ENCODE measurements at regions of chr21 and their contacts with region 1.

Region 1: DNA sequence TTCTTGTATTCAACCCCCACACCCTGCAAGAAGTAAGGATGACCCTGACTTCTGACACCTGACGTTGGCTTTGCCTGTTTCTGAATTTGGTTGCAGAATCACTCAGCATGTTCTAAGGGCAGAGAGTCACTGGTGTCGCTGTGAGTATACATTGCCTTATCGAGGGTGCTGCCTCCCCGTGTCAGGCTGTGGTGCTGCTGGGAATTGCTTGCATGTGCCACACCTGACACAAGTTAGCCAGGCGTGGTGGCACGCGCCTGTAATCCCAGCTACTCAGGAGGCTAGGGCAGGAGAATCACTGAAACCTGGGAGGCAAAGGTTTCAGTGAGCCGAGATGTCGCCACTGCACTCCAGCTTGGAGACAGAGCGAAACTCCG is 45.9 kb downstream of the WDR4 start:
- DNase-seq: peak in 8 of 9 donors; percentile 52 to 72 (median 60)
- ATAC-seq: peak; percentile 85
- H3K4me3 ChIP-seq: peak overlapping the region; percentile 32
- H3K4me3 Mint-ChIP-seq: peak overlapping the region; percentile 72 to 86 (median 83)
- H3K27ac ChIP-seq: peak overlapping the region; percentile 4
- H3K27ac Mint-ChIP-seq: peak overlapping the region; percentile 16 to 94 (median 83)
- H3K4me1 ChIP-seq: peaks cover 12 to 29% of the 10 kb centered on the region in 2 donors
- H3K4me1 Mint-ChIP-seq: peaks cover 22 to 39% (median 33%) of the 10 kb centered on the region in 7 donors
- H3K27me3 ChIP-seq: no peaks in the 10 kb centered on the region
- H3K27me3 Mint-ChIP-seq: peaks cover 0 to 15% (median 3%) of the 10 kb centered on the region in 5 donors

Region 2: DNA sequence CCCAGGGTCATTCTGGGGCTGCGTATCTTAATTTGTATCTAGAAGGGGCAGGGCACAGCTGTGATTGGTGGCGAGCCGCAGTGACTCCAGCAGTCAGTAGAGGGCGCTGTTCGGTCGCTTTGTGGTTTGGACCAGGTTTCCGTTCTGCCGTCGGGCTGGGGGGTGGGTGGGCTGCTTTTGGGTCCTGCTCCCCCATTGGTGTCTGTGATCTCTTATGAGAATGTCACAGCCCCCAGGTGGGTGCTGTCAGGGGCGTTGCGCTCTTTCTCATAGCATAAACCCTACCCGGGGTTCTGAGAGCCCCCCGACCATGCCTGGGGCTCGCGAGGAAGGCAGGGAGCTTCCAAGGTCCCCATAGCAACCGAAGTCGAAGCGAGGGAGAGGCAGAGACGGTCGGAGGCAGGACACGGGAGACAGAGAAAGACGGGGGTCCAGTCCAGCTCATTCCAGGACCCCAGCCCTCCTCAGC is 523.6 kb before region 1 on chr21:
- CTCF ChIA-PET with region 1: no interaction called
- POLR2A ChIA-PET with region 1: no interaction called
- intact Hi-C with region 1: loop called in 1 of 2 experiments (anchors 5 kb)
- DNase-seq: peak; percentile 48 to 80 (median 61)
- ATAC-seq: peak; percentile 86
- H3K4me3 ChIP-seq: no peak overlapping the region
- H3K4me3 Mint-ChIP-seq: peak overlapping the region in 6 of 10 donors; percentile 7 to 46 (median 38)
- H3K27ac ChIP-seq: no peak overlapping the region
- H3K27ac Mint-ChIP-seq: peak overlapping the region in 6 of 9 donors; percentile 21 to 49 (median 36)
- H3K4me1 ChIP-seq: peaks cover 0 to 8% of the 10 kb centered on the region in 2 donors
- H3K4me1 Mint-ChIP-seq: peaks cover 0 to 16% (median 7%) of the 10 kb centered on the region in 7 donors
- H3K27me3 ChIP-seq: no peaks in the 10 kb centered on the region
- H3K27me3 Mint-ChIP-seq: peaks cover 0 to 15% (median 0%) of the 10 kb centered on the region in 5 donors

Region 3: GRCh38 chr21:42593007-42593806 is 240.2 kb before region 1 on chr21:
- CTCF ChIA-PET with region 1: interaction called, 6 read pairs
- POLR2A ChIA-PET with region 1: interaction called, 3 read pairs
- intact Hi-C with region 1: loop called (anchors 1 to 5 kb)
- DNase-seq: peak; percentile 52 to 75 (median 68)
- ATAC-seq: peak; percentile 81
- H3K4me3 ChIP-seq: no peak overlapping the region
- H3K4me3 Mint-ChIP-seq: peak overlapping the region in 1 of 10 donors; percentile 25
- H3K27ac ChIP-seq: no peak overlapping the region
- H3K27ac Mint-ChIP-seq: peak overlapping the region in 1 of 9 donors; percentile 15
- H3K4me1 ChIP-seq: peaks cover 0 to 13% of the 10 kb centered on the region in 2 donors
- H3K4me1 Mint-ChIP-seq: peaks cover 0 to 29% (median 22%) of the 10 kb centered on the region in 7 donors
- H3K27me3 ChIP-seq: no peaks in the 10 kb centered on the region
- H3K27me3 Mint-ChIP-seq: no peaks in the 10 kb centered on the region

Region 4: DNA sequence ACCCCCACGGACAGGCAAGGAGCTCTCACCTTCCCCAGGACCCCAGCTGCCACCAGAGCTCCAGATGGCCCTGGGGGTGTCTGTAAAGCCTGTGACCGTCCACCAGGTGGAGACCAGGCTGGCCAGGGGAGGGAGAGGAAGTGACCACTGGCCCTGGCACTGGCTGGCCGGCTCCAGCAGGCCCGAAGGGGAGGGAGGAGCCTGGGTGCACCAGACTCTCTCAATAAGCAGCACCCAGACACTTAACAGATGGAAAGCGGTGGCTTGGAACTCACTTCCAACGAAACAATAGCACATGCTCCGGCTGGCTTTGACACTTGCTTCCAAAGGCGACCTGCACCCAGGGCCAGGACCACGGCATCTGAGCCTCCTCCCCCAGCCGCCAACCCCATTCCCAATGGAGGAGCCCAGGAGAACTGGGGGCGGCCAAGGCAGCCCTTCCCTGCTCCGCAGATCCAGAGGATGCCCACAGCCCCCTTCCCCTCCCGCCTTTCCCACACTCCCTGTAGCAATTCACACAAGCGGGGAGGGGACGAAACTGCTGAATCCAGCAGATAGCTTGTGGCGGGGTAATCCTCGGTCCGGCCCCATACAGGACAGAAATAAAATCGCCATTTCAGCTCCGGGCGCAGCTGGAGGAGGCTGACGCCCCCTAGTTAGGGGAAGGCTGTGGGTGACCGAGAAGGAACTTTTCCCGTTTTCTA is 180.7 kb before region 1 on chr21:
- CTCF ChIA-PET with region 1: no interaction called
- POLR2A ChIA-PET with region 1: no interaction called
- intact Hi-C with region 1: loop called (anchors 1 to 5 kb)
- DNase-seq: no peak
- ATAC-seq: no peak
- H3K4me3 ChIP-seq: no peak overlapping the region
- H3K4me3 Mint-ChIP-seq: peak overlapping the region; percentile 68 to 88 (median 84)
- H3K27ac ChIP-seq: no peak overlapping the region
- H3K27ac Mint-ChIP-seq: peak overlapping the region in 8 of 9 donors; percentile 1 to 86 (median 68)
- H3K4me1 ChIP-seq: peaks cover 0 to 15% of the 10 kb centered on the region in 2 donors
- H3K4me1 Mint-ChIP-seq: peaks cover 17 to 29% (median 24%) of the 10 kb centered on the region in 7 donors
- H3K27me3 ChIP-seq: peaks cover 0 to 4% of the 10 kb centered on the region in 2 donors
- H3K27me3 Mint-ChIP-seq: peaks cover 0 to 50% (median 0%) of the 10 kb centered on the region in 5 donors

Region 5: GRCh38 chr21:42746593-42747275 is 86.7 kb before region 1 on chr21:
- CTCF ChIA-PET with region 1: no interaction called
- POLR2A ChIA-PET with region 1: no interaction called
- intact Hi-C with region 1: loop called in 1 of 2 experiments (anchors 2 kb)
- DNase-seq: peak; percentile 33 to 85 (median 77)
- ATAC-seq: peak; percentile 90
- H3K4me3 ChIP-seq: peak overlapping the region; percentile 36
- H3K4me3 Mint-ChIP-seq: peak overlapping the region; percentile 72 to 90 (median 80)
- H3K27ac ChIP-seq: peak overlapping the region; percentile 63
- H3K27ac Mint-ChIP-seq: peak overlapping the region; percentile 96 to 100 (median 98)
- H3K4me1 ChIP-seq: peaks cover 19 to 26% of the 10 kb centered on the region in 2 donors
- H3K4me1 Mint-ChIP-seq: peaks cover 18 to 46% (median 32%) of the 10 kb centered on the region in 7 donors
- H3K27me3 ChIP-seq: no peaks in the 10 kb centered on the region
- H3K27me3 Mint-ChIP-seq: no peaks in the 10 kb centered on the region

Region 6: DNA sequence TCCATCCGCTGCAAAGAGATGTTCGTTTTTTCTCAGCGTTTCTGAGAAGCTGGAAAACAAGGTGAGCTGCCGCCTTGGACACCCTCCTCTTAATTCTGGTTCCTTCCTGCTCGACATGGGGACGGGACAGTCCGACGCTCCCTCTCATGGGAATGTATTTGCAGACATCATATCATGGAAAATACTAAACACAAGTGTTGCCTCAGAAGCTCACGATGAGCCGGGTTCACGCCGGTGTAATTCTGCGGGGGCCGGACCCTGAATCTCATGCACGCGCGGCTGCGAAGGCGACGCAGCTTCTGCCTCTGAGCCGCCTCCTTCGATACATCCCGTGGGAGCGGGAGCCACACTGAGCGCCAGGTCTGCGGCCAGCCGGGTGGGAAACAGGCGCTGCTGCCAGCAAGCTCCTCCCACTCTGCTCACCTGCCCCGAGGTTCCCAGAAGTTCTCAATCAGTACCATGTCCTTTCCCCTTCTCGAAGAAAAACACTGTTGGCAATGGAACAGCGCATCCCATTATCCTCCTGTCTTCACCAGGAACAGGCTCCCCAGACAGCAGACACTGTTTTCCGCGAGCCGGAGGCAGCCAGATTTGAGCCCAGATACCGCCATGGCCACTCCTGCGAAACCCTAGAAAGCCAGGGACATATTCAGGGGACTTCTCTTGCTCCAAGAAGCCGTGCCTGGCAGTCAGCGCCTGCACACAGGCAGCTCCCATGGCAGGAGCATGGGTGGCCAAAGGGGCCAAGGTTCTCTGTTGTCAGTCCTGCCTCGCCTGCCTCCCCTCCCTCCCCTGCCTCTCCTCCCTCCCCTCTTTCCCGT is 52.1 kb before region 1 on chr21:
- CTCF ChIA-PET with region 1: interaction called, 3 read pairs
- POLR2A ChIA-PET with region 1: no interaction called
- intact Hi-C with region 1: loop called in 1 of 2 experiments (anchors 1 kb)
- DNase-seq: peak in 1 of 9 donors; percentile 11
- ATAC-seq: no peak
- H3K4me3 ChIP-seq: peak overlapping the region; percentile 30
- H3K4me3 Mint-ChIP-seq: peak overlapping the region; percentile 40 to 92 (median 80)
- H3K27ac ChIP-seq: peak overlapping the region; percentile 7
- H3K27ac Mint-ChIP-seq: peak overlapping the region; percentile 31 to 100 (median 87)
- H3K4me1 ChIP-seq: peaks cover 14 to 44% of the 10 kb centered on the region in 2 donors
- H3K4me1 Mint-ChIP-seq: peaks cover 35 to 65% (median 48%) of the 10 kb centered on the region in 7 donors
- H3K27me3 ChIP-seq: no peaks in the 10 kb centered on the region
- H3K27me3 Mint-ChIP-seq: peaks cover 0 to 37% (median 0%) of the 10 kb centered on the region in 5 donors

Region 7: GRCh38 chr21:42892931-42893755 is 59.7 kb after region 1 on chr21 and contains the start of gene NDUFV3:
- CTCF ChIA-PET with region 1: no interaction called
- POLR2A ChIA-PET with region 1: no interaction called
- intact Hi-C with region 1: loop called in 1 of 2 experiments (anchors 10 kb)
- DNase-seq: peak; percentile 96 to 100 (median 98)
- ATAC-seq: peak; percentile 96
- H3K4me3 ChIP-seq: peak within 1 kb of the TSS; percentile 94
- H3K4me3 Mint-ChIP-seq: peak within 1 kb of the TSS; percentile 87 to 96 (median 90)
- H3K27ac ChIP-seq: peak within 1 kb of the TSS; percentile 97
- H3K27ac Mint-ChIP-seq: peak within 1 kb of the TSS; percentile 92 to 98 (median 97)
- H3K4me1 ChIP-seq: peaks cover 6 to 8% of the 10 kb centered on the region in 2 donors
- H3K4me1 Mint-ChIP-seq: peaks cover 14 to 25% (median 22%) of the 10 kb centered on the region in 7 donors
- H3K27me3 ChIP-seq: no peaks in the 10 kb centered on the region
- H3K27me3 Mint-ChIP-seq: no peaks in the 10 kb centered on the region
- total RNA-seq, gene NDUFV3: 25.3 to 33.1 (median 30.9) TPM